Upper lobe of right lung (tissue), 1 donor: ENCODE measurements at regions of chr4 and their contacts with region 1.

Region 1: DNA sequence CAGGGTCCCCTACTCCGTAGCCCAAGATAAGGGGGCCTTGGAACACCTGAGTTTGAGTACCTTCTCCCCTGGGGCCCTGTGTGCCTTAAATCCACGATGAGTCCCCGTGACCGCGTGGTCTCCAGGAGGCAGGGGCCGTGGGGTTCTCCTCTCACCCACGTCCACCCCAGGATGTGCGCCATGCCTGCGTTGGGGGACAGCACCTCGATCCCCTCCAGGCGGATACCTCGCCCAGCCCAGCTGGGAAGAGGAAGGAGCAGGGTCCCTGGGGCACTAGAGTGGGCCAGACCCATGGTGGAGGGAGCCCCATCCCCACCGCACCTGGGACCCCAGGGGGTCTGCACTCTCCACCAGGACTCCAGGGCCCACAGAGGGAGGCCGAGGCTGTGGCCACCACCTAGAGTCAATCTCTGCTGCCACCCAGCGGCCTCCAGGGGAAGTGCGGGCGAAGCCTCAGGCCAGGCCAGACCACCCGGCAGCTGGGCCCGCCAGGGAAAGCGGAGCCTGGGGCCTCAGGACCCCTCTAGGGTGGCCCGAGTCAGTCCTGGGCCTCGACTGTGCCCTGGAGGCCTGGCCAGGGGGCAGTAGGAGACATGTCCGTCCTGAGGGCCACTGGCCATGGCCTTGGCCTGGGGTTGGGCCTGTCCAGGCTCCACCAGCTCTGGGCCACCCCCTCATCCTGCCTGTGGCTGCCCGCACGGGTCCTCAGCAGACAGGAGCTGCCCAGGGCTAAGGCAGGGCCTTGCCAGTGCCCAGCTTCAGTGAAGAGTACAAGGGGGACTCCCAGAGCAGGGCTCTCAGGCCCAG is 55.0 kb downstream of the FAM53A start:
- DNase-seq: peak; percentile 84
- ATAC-seq: peak; percentile 86
- H3K4me3 ChIP-seq: no peak overlapping the region
- H3K27ac ChIP-seq: no peak overlapping the region
- H3K4me1 ChIP-seq: no peaks in the 10 kb centered on the region
- H3K27me3 ChIP-seq: no peaks in the 10 kb centered on the region
- CTCF ChIP-seq: peak; percentile 98

Region 2: GRCh38 chr4:1356181-1356998 is 272.7 kb before region 1 on chr4:
- intact Hi-C with region 1: loop called (anchors 5 kb)
- DNase-seq: no peak
- ATAC-seq: peak; percentile 53
- H3K4me3 ChIP-seq: no peak overlapping the region
- H3K27ac ChIP-seq: no peak overlapping the region
- H3K4me1 ChIP-seq: no peaks in the 10 kb centered on the region
- H3K27me3 ChIP-seq: no peaks in the 10 kb centered on the region
- CTCF ChIP-seq: peak; percentile 84

Region 3: DNA sequence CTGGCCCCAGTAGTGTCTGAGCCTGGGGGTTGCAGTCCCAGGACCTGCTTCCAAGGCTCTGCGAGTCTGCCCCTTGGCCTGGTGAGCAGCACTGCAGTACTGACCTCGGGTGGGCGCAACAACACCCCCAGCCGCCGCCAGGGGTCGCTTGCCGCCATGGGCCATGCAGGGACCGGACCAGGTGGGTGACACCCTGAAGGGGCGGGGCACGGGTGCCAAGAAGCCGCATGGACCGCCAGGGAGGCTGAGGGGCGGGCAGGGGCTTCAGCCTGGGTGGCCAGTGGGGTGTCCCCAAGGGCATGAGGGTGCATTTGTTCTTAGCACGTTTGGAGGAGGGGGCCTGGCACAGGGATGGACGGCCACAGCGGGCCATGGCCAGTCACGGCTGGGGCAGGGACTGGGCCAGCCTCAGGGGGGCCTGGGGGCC is 117.2 kb after region 1 on chr4:
- intact Hi-C with region 1: no loop called
- DNase-seq: peak; percentile 86
- ATAC-seq: peak; percentile 69
- H3K4me3 ChIP-seq: no peak overlapping the region
- H3K27ac ChIP-seq: no peak overlapping the region
- H3K4me1 ChIP-seq: peaks cover 4% of the 10 kb centered on the region
- H3K27me3 ChIP-seq: no peaks in the 10 kb centered on the region
- CTCF ChIP-seq: peak; percentile 72

Region 4: DNA sequence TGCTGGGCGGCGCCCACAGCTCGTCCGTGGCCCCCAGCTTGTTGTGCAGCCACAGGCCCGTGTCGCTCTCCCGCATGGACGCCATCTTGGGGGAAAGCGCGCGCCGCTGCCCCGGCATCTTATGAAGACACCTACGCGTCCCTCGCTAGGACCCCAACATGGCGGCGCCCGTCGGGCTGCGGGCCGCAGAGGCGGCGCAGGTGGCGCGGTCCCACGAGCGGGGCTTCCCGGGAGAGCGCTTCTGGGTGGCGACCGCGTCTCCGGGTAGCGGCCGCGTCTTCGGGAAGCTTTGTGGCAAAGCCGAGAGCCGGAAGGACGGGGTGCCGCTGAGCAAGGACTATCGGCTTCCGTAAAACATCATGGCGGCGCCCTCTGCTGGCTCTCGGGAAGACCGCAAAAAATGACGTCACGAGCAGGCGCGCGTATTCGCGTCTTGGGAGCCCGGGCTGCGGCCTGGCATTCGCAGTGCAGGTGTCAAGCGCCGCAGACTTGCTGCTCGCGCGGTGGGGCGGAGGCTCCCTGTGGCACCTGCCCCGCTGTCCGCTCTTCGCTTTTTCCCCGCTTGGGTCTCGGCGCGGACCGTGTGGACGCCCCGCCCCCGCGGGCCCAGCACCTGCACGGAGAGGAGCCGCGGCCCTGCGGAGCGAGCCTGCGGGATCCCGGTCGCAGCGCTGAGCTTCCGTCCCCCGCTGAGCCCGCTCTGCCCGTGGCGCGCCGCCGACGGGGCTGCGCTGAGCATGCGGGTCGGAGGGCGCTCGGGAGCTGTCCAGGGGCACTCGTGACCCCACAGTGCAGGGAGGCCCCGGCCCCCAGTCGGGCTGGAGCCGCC is 380.0 kb after region 1 on chr4 and contains the start of gene NELFA:
- intact Hi-C with region 1: no loop called
- DNase-seq: peak; percentile 98
- ATAC-seq: peak; percentile 96
- H3K4me3 ChIP-seq: peak within 1 kb of the TSS; percentile 71
- H3K27ac ChIP-seq: peak within 1 kb of the TSS; percentile 99
- H3K4me1 ChIP-seq: peaks cover 20% of the 10 kb centered on the region
- H3K27me3 ChIP-seq: no peaks in the 10 kb centered on the region
- CTCF ChIP-seq: peak; percentile 57
- total RNA-seq, gene NELFA: 22.7 TPM